PC-9 (cell line): ENCODE measurements at regions of chr4 and their contacts with region 1.

Region 1: GRCh38 chr4:2934813-2935761 is 28.1 kb downstream of the NOP14 start:
- DNase-seq: peak; percentile 63 to 94
- H3K4me3 ChIP-seq: peak overlapping the region; percentile 65
- H3K27ac ChIP-seq: peak overlapping the region; percentile 71
- H3K4me1 ChIP-seq: peaks cover 26% of the 10 kb centered on the region
- H3K27me3 ChIP-seq: no peaks in the 10 kb centered on the region
- CTCF ChIP-seq: no peak

Region 2: GRCh38 chr4:2458546-2459491 is 476.3 kb before region 1 on chr4:
- CTCF ChIA-PET with region 1: no interaction called
- POLR2A ChIA-PET with region 1: no interaction called
- intact Hi-C with region 1: no loop called
- DNase-seq: peak in 1 of 2 experiments; percentile 26
- H3K4me3 ChIP-seq: no peak overlapping the region
- H3K27ac ChIP-seq: no peak overlapping the region
- H3K4me1 ChIP-seq: no peaks in the 10 kb centered on the region
- H3K27me3 ChIP-seq: peaks cover 17% of the 10 kb centered on the region; the same call in 1 of the 2 replicates
- CTCF ChIP-seq: no peak

Region 3: DNA sequence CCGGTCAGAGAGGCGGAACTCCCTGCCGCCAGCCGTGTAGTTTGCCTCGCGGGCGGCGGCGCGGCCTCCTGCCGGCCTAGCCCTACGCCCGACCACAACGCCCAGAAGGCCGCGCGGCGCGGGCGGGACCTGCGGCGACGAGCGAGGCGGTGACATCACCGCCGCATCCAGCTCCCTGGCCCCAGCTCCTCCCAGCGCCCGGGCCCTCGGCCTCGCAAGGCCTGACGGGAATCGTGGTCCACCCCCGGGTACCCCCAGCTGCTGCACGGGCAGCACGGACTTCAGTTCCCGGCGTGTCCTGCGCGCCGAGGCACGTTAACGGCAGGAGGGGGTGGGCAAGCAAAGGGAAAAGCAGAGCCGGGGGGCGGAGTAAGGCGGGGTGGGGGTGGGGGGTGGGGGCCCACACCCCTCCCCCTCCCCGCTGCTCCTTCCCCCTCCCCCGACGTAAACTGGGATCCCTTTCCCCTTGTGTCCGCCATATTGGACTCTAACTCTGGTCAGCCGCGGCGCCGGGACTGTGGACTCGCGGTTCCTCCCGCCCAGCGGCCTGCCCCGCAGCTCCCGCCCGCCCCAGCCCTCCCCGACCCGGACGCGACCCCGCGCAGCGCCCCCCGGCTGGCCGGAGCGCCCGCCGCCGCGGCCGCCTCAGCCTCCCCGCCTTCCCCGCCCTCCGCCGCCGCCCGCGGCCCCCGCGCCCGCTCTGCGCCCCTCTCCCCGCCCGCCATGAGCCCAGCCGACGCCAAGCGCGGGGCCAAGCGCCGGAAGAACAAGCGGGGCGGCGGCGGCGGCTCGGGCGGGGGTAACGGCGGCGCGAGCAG is 398.7 kb before region 1 on chr4 and contains the start of gene FAM193A:
- CTCF ChIA-PET with region 1: interaction called, 5 read pairs
- POLR2A ChIA-PET with region 1: interaction called, 3 read pairs
- intact Hi-C with region 1: loop called (anchors 2 kb)
- DNase-seq: peak; percentile 96 to 99
- H3K4me3 ChIP-seq: peak within 1 kb of the TSS; percentile 81
- H3K27ac ChIP-seq: peak within 1 kb of the TSS; percentile 44; the same call in 1 of the 2 replicates
- H3K4me1 ChIP-seq: peaks cover 13% of the 10 kb centered on the region; the same call in 1 of the 2 replicates
- H3K27me3 ChIP-seq: no peaks in the 10 kb centered on the region
- CTCF ChIP-seq: no peak
- total RNA-seq, gene FAM193A: 20.1 and 23.4 TPM in 2 replicates

Region 4: GRCh38 chr4:2755837-2756694 is 179.0 kb before region 1 on chr4 and contains the start of gene TNIP2:
- CTCF ChIA-PET with region 1: no interaction called
- POLR2A ChIA-PET with region 1: interaction called, 21 read pairs
- intact Hi-C with region 1: loop called (anchors 2 kb)
- DNase-seq: peak; percentile 62 to 81
- H3K4me3 ChIP-seq: peak within 1 kb of the TSS; percentile 61; the same call in 1 of the 2 replicates
- H3K27ac ChIP-seq: no peak within 1 kb of the TSS
- H3K4me1 ChIP-seq: peaks cover 6% of the 10 kb centered on the region; the same call in 1 of the 2 replicates
- H3K27me3 ChIP-seq: no peaks in the 10 kb centered on the region
- CTCF ChIP-seq: no peak
- total RNA-seq, gene TNIP2: 37.1 and 44.8 TPM in 2 replicates

Region 5: DNA sequence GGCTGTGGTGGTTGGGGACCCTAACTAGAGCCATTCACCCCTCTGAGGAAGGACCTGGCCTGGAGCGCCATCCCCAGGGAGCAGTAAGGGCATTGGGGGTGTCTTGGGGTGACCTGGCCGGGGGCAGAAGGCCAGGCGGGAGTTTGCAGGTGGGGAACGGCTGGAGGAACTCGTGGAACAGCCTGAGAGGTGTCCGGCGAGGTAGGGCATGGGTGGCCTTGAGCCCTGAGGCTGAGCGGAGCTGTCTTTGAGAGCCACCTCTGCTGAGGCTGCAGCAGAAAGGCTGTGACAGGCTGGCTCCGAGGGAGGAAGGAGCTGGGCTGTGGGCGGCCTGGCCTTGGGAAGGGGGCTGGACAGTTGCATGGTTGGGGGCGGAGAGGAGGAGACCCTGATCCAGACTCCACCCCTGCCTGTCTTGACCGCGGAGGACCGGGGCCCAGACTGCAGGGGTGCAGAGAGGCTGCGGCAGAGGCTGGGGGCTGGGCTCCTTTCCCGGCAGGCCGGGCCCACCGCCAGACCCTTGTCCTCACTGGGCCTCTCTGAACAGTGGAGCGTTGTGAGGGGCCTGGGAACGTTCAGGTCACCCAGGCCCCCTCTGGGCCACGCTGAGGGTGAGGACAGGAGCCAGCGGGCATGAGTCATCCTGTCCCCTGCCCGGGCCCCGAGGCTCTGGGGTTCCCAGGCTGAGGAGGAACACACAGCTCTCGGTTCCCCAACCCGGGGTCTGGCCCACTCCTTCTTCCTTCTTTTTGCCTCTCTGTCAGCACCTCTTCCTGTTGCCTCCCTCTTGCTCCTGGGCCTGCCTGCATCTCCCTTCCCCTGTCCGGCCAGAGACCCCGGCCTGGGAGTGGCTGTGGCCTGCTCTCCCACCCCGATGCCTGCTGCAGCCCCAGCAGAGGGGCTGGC is 134.1 kb before region 1 on chr4:
- CTCF ChIA-PET with region 1: no interaction called
- POLR2A ChIA-PET with region 1: interaction called, 5 read pairs
- intact Hi-C with region 1: loop called (anchors 1 kb)
- DNase-seq: peak; percentile 51 to 73
- H3K4me3 ChIP-seq: no peak overlapping the region
- H3K27ac ChIP-seq: peak overlapping the region; percentile 51; the same call in 1 of the 2 replicates
- H3K4me1 ChIP-seq: peaks cover 77% of the 10 kb centered on the region
- H3K27me3 ChIP-seq: no peaks in the 10 kb centered on the region
- CTCF ChIP-seq: no peak

Region 6: GRCh38 chr4:2963175-2963965 is 28.3 kb after region 1 on chr4 and contains the starts of genes GRK4 and NOP14:
- CTCF ChIA-PET with region 1: interaction called, 3 read pairs
- POLR2A ChIA-PET with region 1: interaction called, 3 read pairs
- intact Hi-C with region 1: loop called (anchors 1 kb)
- DNase-seq: peak; percentile 91 to 96
- H3K4me3 ChIP-seq: peak within 1 kb of the TSS; percentile 94
- H3K27ac ChIP-seq: peak within 1 kb of the TSS; percentile 61
- H3K4me1 ChIP-seq: peaks cover 14% of the 10 kb centered on the region
- H3K27me3 ChIP-seq: no peaks in the 10 kb centered on the region
- CTCF ChIP-seq: no peak; the same call in 1 of the 2 replicates
- total RNA-seq, gene GRK4: 3.1 and 4.4 TPM in 2 replicates
- total RNA-seq, gene NOP14: 30.9 and 33.6 TPM in 2 replicates